ENCODE measurements at regions of chr1 and their contacts with region 1.

Region 1: DNA sequence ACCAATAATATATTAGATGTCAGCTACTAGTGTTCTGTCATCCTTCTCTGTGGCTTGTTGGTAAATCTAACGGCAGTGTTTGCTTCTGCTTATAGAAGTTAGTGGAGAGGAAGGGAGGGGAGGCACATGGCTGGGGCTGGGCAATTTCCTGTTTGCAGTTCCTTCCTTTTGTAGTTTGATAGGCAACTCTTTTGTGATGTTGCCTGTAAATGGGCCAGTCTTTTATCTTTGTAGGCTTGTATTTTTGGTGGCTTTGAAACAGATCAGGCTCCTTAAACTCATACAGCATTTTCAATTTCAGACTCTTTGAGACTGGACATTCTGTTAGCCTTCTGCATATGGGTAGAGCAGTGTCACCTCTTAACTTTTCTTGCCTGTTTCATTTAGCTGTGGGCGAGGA is 48.1 kb downstream of the CDC14A start:
- DNase-seq: peak; percentile 54 to 91 (median 68)
- ATAC-seq: peak; percentile 91
- H3K4me3 ChIP-seq: peak overlapping the region; percentile 15
- H3K4me3 Mint-ChIP-seq: peak overlapping the region; percentile 81
- H3K27ac ChIP-seq: peak overlapping the region; percentile 51
- H3K27ac Mint-ChIP-seq: peak overlapping the region; percentile 85
- H3K4me1 ChIP-seq: peaks cover 62% of the 10 kb centered on the region
- H3K4me1 Mint-ChIP-seq: peaks cover 94% of the 10 kb centered on the region
- H3K27me3 ChIP-seq: no peaks in the 10 kb centered on the region
- H3K27me3 Mint-ChIP-seq: no peaks in the 10 kb centered on the region
- CTCF ChIP-seq: no peak

Region 2: GRCh38 chr1:100335436-100335835 is 65.0 kb before region 1 on chr1:
- CTCF ChIA-PET with region 1: no interaction called
- POLR2A ChIA-PET with region 1: no interaction called
- intact Hi-C with region 1: no loop called
- DNase-seq: no peak
- ATAC-seq: no peak
- H3K4me3 ChIP-seq: no peak overlapping the region
- H3K4me3 Mint-ChIP-seq: no peak overlapping the region
- H3K27ac ChIP-seq: no peak overlapping the region
- H3K27ac Mint-ChIP-seq: no peak overlapping the region
- H3K4me1 ChIP-seq: no peaks in the 10 kb centered on the region
- H3K4me1 Mint-ChIP-seq: no peaks in the 10 kb centered on the region
- H3K27me3 ChIP-seq: no peaks in the 10 kb centered on the region
- H3K27me3 Mint-ChIP-seq: no peaks in the 10 kb centered on the region
- CTCF ChIP-seq: no peak

Region 3: DNA sequence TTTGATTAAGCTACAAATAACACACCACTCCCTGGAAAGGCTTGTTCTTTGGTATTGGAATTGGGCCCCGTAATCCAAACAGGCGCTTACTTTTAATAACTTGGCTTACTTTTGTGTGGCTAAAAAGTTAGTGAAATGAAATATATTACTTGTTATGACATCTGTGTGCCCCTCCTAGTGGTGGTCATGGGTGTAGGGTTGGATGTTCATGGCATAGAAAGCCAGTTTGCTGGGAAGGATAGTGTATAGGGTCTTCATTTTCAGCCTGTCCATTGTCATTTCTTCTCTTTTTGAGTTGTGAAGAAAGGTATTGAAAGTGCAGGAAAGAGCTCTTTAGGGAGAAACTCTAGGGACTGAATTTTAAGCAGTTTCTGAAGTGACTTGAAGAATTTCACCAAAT is 42.2 kb before region 1 on chr1:
- CTCF ChIA-PET with region 1: interaction called, 4 read pairs
- POLR2A ChIA-PET with region 1: interaction called, 30 read pairs
- intact Hi-C with region 1: no loop called
- DNase-seq: peak in 7 of 14 experiments; percentile 6 to 60 (median 20)
- ATAC-seq: peak; percentile 40
- H3K4me3 ChIP-seq: peak overlapping the region; percentile 8
- H3K4me3 Mint-ChIP-seq: peak overlapping the region; percentile 73
- H3K27ac ChIP-seq: no peak overlapping the region
- H3K27ac Mint-ChIP-seq: peak overlapping the region; percentile 37
- H3K4me1 ChIP-seq: peaks cover 63% of the 10 kb centered on the region
- H3K4me1 Mint-ChIP-seq: peaks cover 95% of the 10 kb centered on the region
- H3K27me3 ChIP-seq: no peaks in the 10 kb centered on the region
- H3K27me3 Mint-ChIP-seq: no peaks in the 10 kb centered on the region
- CTCF ChIP-seq: peak; percentile 54

Region 4: DNA sequence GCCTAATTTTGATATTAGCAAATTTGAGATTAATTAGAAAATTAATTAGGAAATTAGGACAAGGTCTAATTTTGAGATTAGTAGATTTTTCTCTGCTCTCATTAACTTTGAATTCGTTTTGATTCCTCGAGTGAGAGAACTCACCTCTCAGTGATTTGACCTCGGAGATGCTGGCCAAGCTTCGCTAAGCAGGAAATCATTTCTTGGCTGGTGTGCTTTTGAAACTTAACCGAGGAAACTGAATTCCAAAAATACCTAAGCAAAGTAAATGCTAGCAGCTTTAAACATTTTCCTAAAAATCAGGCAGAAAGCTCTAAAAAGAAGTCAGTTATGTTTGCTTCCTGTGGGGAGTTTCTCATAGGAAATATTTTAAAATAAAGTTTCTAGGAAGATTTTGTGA is 13.2 kb before region 1 on chr1:
- CTCF ChIA-PET with region 1: interaction called, 6 read pairs
- POLR2A ChIA-PET with region 1: interaction called, 18 read pairs
- intact Hi-C with region 1: loop called in 1 of 2 experiments (anchors 2 kb)
- DNase-seq: peak in 2 of 14 experiments; percentile 32
- ATAC-seq: no peak
- H3K4me3 ChIP-seq: peak overlapping the region; percentile 35
- H3K4me3 Mint-ChIP-seq: peak overlapping the region; percentile 74
- H3K27ac ChIP-seq: peak overlapping the region in 1 of 2 donors; percentile 78
- H3K27ac Mint-ChIP-seq: peak overlapping the region; percentile 83
- H3K4me1 ChIP-seq: peaks cover 55% of the 10 kb centered on the region
- H3K4me1 Mint-ChIP-seq: peaks cover 94% of the 10 kb centered on the region
- H3K27me3 ChIP-seq: no peaks in the 10 kb centered on the region
- H3K27me3 Mint-ChIP-seq: no peaks in the 10 kb centered on the region
- CTCF ChIP-seq: no peak

Region 5: DNA sequence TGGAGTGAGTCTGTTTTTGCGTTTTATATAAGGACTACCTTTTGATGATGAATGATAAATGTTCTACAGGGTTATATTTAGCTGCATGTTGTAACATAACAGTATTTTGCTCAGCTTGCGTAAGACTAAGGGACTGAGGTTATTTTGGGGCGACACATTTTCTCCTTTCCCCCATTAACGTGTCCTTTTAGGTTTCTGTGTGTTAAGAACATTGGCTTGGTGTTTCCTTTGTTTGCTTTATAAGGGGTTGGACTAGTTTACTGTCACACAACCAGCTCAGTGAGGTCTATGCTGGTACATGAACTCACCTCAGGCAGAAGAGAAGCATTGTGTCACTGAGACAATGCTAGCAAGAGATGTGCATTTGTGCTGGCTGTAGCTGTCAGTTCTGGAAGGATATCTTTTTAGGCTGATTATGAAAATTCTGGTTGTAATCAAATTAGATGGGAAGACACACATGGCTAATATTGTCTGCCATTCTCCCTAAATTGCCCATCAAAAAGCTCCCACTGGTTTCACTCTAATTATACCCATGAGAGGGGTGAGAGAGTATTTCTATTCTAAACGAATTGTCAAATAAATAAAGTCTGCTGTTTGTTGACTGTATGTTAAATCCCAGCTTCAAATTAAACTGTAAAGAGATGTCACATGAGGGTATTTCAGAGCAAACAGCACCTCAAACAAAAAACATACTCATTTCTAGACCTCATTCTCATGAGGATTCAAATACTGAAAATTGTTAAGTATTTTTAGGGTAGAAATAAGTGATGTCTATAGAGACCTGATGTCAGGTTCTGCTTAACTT is 14.5 kb after region 1 on chr1:
- CTCF ChIA-PET with region 1: interaction called, 11 read pairs
- POLR2A ChIA-PET with region 1: interaction called, 41 read pairs
- intact Hi-C with region 1: loop called in 1 of 2 experiments (anchors 2 kb)
- DNase-seq: peak in 3 of 14 experiments; percentile 54 to 81 (median 56)
- ATAC-seq: peak; percentile 82
- H3K4me3 ChIP-seq: no peak overlapping the region
- H3K4me3 Mint-ChIP-seq: peak overlapping the region; percentile 74
- H3K27ac ChIP-seq: peak overlapping the region; percentile 3 to 59
- H3K27ac Mint-ChIP-seq: peak overlapping the region; percentile 86
- H3K4me1 ChIP-seq: peaks cover 63% of the 10 kb centered on the region
- H3K4me1 Mint-ChIP-seq: peaks cover 88% of the 10 kb centered on the region
- H3K27me3 ChIP-seq: no peaks in the 10 kb centered on the region
- H3K27me3 Mint-ChIP-seq: no peaks in the 10 kb centered on the region
- CTCF ChIP-seq: no peak

Region 6: DNA sequence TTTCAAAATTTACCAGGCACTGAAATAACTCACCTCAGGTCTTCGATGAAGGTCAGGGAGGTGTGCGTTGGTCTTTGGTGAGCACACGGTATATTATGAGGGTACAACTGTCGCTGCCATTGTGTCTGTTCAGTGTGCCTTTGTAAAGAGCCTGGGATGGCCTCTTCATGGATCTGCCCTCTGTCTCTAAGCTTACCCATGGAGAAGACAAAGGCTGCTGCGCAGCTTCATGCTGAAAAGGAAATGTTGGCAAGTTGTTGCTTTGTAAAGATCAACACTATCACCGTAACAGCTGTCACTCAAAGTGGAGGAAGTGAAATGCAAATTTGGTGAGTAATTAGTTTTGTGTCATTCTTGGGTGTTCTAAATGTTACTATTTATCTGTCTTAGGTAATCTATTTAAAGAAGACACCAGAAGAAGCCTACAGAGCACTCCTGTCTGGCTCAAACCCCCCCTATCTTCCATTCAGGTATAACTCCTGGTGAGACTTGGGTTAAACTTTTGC is 23.5 kb after region 1 on chr1:
- CTCF ChIA-PET with region 1: interaction called, 12 read pairs
- POLR2A ChIA-PET with region 1: interaction called, 35 read pairs
- intact Hi-C with region 1: no loop called
- DNase-seq: peak in 9 of 14 experiments; percentile 11 to 85 (median 33)
- ATAC-seq: peak; percentile 74
- H3K4me3 ChIP-seq: peak overlapping the region; percentile 51
- H3K4me3 Mint-ChIP-seq: peak overlapping the region; percentile 91
- H3K27ac ChIP-seq: peak overlapping the region; percentile 49 to 54
- H3K27ac Mint-ChIP-seq: peak overlapping the region; percentile 94
- H3K4me1 ChIP-seq: peaks cover 34% of the 10 kb centered on the region
- H3K4me1 Mint-ChIP-seq: peaks cover 84% of the 10 kb centered on the region
- H3K27me3 ChIP-seq: no peaks in the 10 kb centered on the region
- H3K27me3 Mint-ChIP-seq: no peaks in the 10 kb centered on the region
- CTCF ChIP-seq: peak; percentile 14

Region 7: DNA sequence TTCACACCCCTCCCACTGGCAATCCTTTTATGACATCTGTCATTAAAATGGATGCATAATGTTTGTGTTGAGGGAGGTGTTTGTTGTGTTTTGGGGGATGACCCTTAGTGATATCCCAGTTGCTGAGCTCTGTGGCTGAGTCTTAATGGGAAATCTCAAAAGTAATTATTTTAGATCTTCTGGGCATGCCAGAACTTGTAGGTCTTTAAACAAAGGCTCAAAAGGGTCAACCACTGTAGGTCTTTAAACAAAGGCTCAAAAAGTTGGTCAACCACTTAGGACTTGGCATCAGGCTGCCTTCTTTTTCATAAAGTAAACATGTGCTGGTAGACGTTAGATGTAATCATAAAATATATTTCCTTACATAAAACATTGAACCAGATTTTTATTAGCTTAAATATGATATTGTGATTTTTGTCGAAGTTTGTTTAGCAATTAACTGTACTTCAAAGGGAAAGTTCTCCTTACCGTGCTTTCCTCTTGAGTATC is 30.0 kb after region 1 on chr1:
- CTCF ChIA-PET with region 1: interaction called, 3 read pairs
- POLR2A ChIA-PET with region 1: interaction called, 7 read pairs
- intact Hi-C with region 1: loop called in 1 of 2 experiments (anchors 5 kb)
- DNase-seq: no peak
- ATAC-seq: no peak
- H3K4me3 ChIP-seq: no peak overlapping the region
- H3K4me3 Mint-ChIP-seq: no peak overlapping the region
- H3K27ac ChIP-seq: no peak overlapping the region
- H3K27ac Mint-ChIP-seq: peak overlapping the region; percentile 68
- H3K4me1 ChIP-seq: peaks cover 41% of the 10 kb centered on the region
- H3K4me1 Mint-ChIP-seq: peaks cover 78% of the 10 kb centered on the region
- H3K27me3 ChIP-seq: no peaks in the 10 kb centered on the region
- H3K27me3 Mint-ChIP-seq: no peaks in the 10 kb centered on the region
- CTCF ChIP-seq: no peak